MCF 10A (cell line): ENCODE measurements at regions of chr7 and their contacts with region 1.

Region 1: GRCh38 chr7:143380255-143380645 is 895 bp upstream of the ZYX start:
- DNase-seq: peak; percentile 80
- H3K4me3 Mint-ChIP-seq: peak overlapping the region; percentile 77
- H3K27ac Mint-ChIP-seq: peak overlapping the region; percentile 88
- H3K4me1 Mint-ChIP-seq: peaks cover 32% of the 10 kb centered on the region
- H3K27me3 Mint-ChIP-seq: no peaks in the 10 kb centered on the region
- CTCF ChIP-seq: peak; percentile 71

Region 2: GRCh38 chr7:143148050-143148449 is 232.2 kb before region 1 on chr7:
- CTCF ChIA-PET with region 1: no interaction called
- POLR2A ChIA-PET with region 1: no interaction called
- intact Hi-C with region 1: no loop called
- DNase-seq: no peak
- H3K4me3 Mint-ChIP-seq: no peak overlapping the region
- H3K27ac Mint-ChIP-seq: no peak overlapping the region
- H3K4me1 Mint-ChIP-seq: no peaks in the 10 kb centered on the region
- H3K27me3 Mint-ChIP-seq: no peaks in the 10 kb centered on the region
- CTCF ChIP-seq: no peak

Region 3: GRCh38 chr7:143287935-143288826 is 92.1 kb before region 1 on chr7 and contains the start of gene CASP2:
- CTCF ChIA-PET with region 1: interaction called, 11 read pairs
- POLR2A ChIA-PET with region 1: interaction called, 10 read pairs
- intact Hi-C with region 1: loop called (anchors 2 kb)
- DNase-seq: peak; percentile 97
- H3K4me3 Mint-ChIP-seq: peak within 1 kb of the TSS; percentile 98
- H3K27ac Mint-ChIP-seq: peak within 1 kb of the TSS; percentile 68
- H3K4me1 Mint-ChIP-seq: peaks cover 42% of the 10 kb centered on the region
- H3K27me3 Mint-ChIP-seq: no peaks in the 10 kb centered on the region
- CTCF ChIP-seq: no peak
- total RNA-seq, gene CASP2: 15.1 and 17.4 TPM in 2 replicates

Region 4: GRCh38 chr7:143331179-143331820 is 49.0 kb before region 1 on chr7:
- CTCF ChIA-PET with region 1: interaction called, 11 read pairs
- POLR2A ChIA-PET with region 1: interaction called, 18 read pairs
- intact Hi-C with region 1: no loop called
- DNase-seq: peak; percentile 92
- H3K4me3 Mint-ChIP-seq: no peak overlapping the region
- H3K27ac Mint-ChIP-seq: peak overlapping the region; percentile 88
- H3K4me1 Mint-ChIP-seq: peaks cover 12% of the 10 kb centered on the region
- H3K27me3 Mint-ChIP-seq: no peaks in the 10 kb centered on the region
- CTCF ChIP-seq: no peak

Region 5: GRCh38 chr7:143416565-143417149 is 36.4 kb after region 1 on chr7:
- CTCF ChIA-PET with region 1: interaction called, 24 read pairs
- POLR2A ChIA-PET with region 1: interaction called, 9 read pairs
- intact Hi-C with region 1: loop called (anchors 1 kb)
- DNase-seq: peak; percentile 75
- H3K4me3 Mint-ChIP-seq: no peak overlapping the region
- H3K27ac Mint-ChIP-seq: no peak overlapping the region
- H3K4me1 Mint-ChIP-seq: peaks cover 32% of the 10 kb centered on the region
- H3K27me3 Mint-ChIP-seq: no peaks in the 10 kb centered on the region
- CTCF ChIP-seq: peak; percentile 73